Activated B cell treated with CpG ODN at 0.5 μM for 24 hours (primary cell): ENCODE measurements at regions of chr1 and their contacts with region 1.

Region 1: GRCh38 chr1:86741947-86742572 is 37.7 kb downstream of the SH3GLB1 start:
- DNase-seq: no peak
- ATAC-seq: no peak
- H3K4me3 Mint-ChIP-seq: no peak overlapping the region
- H3K27ac Mint-ChIP-seq: no peak overlapping the region
- H3K4me1 Mint-ChIP-seq: peaks cover 2% of the 10 kb centered on the region
- H3K27me3 Mint-ChIP-seq: no peaks in the 10 kb centered on the region
- CTCF ChIP-seq: peak; percentile 73

Region 2: GRCh38 chr1:86470859-86471258 is 271.2 kb before region 1 on chr1:
- CTCF ChIA-PET with region 1: no interaction called
- POLR2A ChIA-PET with region 1: no interaction called
- intact Hi-C with region 1: loop called (anchors 2 kb)
- DNase-seq: no peak
- ATAC-seq: peak; percentile 56
- H3K4me3 Mint-ChIP-seq: no peak overlapping the region
- H3K27ac Mint-ChIP-seq: peak overlapping the region; percentile 6
- H3K4me1 Mint-ChIP-seq: peaks cover 6% of the 10 kb centered on the region
- H3K27me3 Mint-ChIP-seq: peaks cover 18% of the 10 kb centered on the region
- CTCF ChIP-seq: no peak

Region 3: DNA sequence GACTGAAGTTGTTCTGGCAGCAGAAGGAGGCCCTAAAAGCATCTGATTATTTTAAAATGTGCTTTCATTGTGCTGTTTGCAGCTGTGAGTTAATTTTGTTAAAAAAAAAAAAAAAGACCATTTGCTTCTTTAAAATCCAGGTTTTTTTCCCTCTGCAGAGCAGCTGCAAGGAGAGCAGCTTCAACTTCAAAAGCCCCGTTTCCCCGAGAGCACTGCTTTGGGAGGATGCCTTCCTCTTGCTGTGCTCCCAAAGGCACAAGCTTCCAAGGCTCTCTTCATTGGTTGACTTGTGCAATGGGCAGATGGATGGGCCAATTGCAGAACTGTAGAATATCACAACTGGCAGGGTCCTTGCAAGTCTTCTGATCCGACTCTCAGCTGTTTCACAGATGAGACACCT is 1482.8 kb after region 1 on chr1:
- CTCF ChIA-PET with region 1: no interaction called
- POLR2A ChIA-PET with region 1: no interaction called
- intact Hi-C with region 1: no loop called
- DNase-seq: no peak
- ATAC-seq: no peak
- H3K4me3 Mint-ChIP-seq: no peak overlapping the region
- H3K27ac Mint-ChIP-seq: no peak overlapping the region
- H3K4me1 Mint-ChIP-seq: no peaks in the 10 kb centered on the region
- H3K27me3 Mint-ChIP-seq: no peaks in the 10 kb centered on the region
- CTCF ChIP-seq: no peak